AG04449 (cell line): ENCODE measurements at regions of chr11 and their contacts with region 1.

Region 1: DNA sequence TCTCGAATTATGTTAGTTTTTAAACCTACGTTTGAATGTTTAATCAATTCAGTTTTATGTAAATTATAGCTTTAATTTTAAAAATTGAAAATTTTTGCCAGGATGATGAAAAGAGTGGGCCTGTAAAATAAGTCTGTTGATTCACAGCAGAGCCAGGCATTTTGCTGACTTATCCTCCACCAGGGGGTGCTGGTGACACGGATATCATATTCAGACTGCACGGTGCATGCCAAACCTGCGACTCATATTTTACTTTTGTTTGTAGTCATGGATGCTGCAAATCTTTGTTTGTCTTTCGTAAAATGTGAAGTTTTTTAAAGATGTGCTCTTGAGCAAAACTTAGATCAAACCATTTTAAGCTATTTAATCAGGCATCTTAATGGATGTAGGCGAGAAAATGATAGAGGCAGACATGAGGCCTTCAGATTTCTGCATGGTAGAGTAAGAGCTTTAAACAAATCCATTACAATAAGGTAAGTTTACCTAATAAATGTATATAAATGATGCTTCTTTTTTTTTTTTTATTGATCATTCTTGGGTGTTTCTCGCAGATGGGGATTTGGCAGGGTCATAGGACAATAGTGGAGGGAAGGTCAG is 3.6 kb upstream of the OR8B3 start:
- DNase-seq: peak; percentile 62
- H3K4me3 ChIP-seq: no peak overlapping the region
- CTCF ChIP-seq: peak; percentile 78

Region 2: GRCh38 chr11:124415356-124415923 is 13.0 kb after region 1 on chr11:
- CTCF ChIA-PET with region 1: interaction called, 20 read pairs
- POLR2A ChIA-PET with region 1: no interaction called
- DNase-seq: peak; percentile 19
- H3K4me3 ChIP-seq: no peak overlapping the region
- CTCF ChIP-seq: peak; percentile 51

Region 3: DNA sequence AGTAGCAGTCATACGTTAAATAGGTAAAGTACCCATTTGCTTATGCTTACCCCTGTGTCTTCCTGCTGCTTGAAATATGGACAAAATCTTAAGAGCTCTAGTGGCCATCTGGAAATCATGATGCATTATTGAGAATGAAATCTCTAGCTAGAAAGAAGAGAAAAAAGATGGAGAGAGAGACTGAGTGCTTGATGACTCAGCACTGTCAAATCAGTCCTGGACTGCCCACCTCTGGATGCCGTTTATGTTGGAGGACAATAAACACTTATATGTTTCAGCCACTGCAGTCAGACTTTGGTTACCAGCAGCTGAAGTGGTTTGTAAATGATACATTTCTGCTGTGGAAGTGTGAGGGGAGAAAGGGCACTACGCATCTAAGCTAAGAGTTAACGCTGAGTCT is 18.6 kb after region 1 on chr11:
- CTCF ChIA-PET with region 1: interaction called, 20 read pairs
- POLR2A ChIA-PET with region 1: no interaction called
- DNase-seq: no peak
- H3K4me3 ChIP-seq: no peak overlapping the region
- CTCF ChIP-seq: no peak

Region 4: GRCh38 chr11:124460459-124460858 is 58.0 kb after region 1 on chr11:
- CTCF ChIA-PET with region 1: no interaction called
- POLR2A ChIA-PET with region 1: no interaction called
- DNase-seq: no peak
- H3K4me3 ChIP-seq: no peak overlapping the region
- CTCF ChIP-seq: no peak

Region 5: GRCh38 chr11:124551189-124551588 is 148.8 kb after region 1 on chr11:
- CTCF ChIA-PET with region 1: no interaction called
- POLR2A ChIA-PET with region 1: no interaction called
- DNase-seq: no peak
- H3K4me3 ChIP-seq: no peak overlapping the region
- CTCF ChIP-seq: no peak

Region 6: GRCh38 chr11:124577716-124578427 is 175.4 kb after region 1 on chr11:
- CTCF ChIA-PET with region 1: interaction called, 15 read pairs
- POLR2A ChIA-PET with region 1: no interaction called
- DNase-seq: no peak
- H3K4me3 ChIP-seq: no peak overlapping the region
- CTCF ChIP-seq: no peak

Region 7: GRCh38 chr11:124586238-124586860 is 183.9 kb after region 1 on chr11:
- CTCF ChIA-PET with region 1: interaction called, 23 read pairs
- POLR2A ChIA-PET with region 1: no interaction called
- DNase-seq: peak; percentile 9
- H3K4me3 ChIP-seq: no peak overlapping the region
- CTCF ChIP-seq: peak; percentile 66

Region 8: DNA sequence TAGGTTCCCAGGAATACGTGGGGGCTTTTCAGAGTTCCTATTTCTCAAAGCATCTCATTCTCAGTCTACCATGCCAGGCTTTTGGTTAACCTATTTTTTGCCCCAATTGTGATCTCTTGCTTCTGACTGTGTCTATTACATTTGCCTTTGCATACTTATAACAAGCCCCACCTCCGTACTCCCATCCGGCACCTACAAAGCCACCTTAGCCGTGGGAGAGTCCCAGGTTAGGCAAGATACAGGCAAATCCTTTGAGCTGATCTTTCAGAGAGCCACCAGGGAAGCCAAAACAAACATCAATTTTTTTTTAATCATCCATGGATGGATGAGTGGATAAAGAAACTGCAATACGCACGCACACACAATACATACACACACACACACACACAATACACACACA is 190.2 kb after region 1 on chr11:
- CTCF ChIA-PET with region 1: interaction called, 23 read pairs
- POLR2A ChIA-PET with region 1: no interaction called
- DNase-seq: no peak
- H3K4me3 ChIP-seq: no peak overlapping the region
- CTCF ChIP-seq: no peak